Adrenal gland (tissue), 19 donors: ENCODE measurements at regions of chr1 and their contacts with region 1.

Region 1: GRCh38 chr1:150621497-150622302 is 7.7 kb downstream of the ENSA start:
- DNase-seq: peak in 6 of 7 donors; percentile 53 to 85 (median 63)
- H3K4me3 ChIP-seq: no peak overlapping the region
- H3K27ac ChIP-seq: peak overlapping the region in 4 of 5 donors; percentile 28 to 76 (median 56)
- H3K4me1 ChIP-seq: peaks cover 28 to 44% of the 10 kb centered on the region in 2 donors
- H3K27me3 ChIP-seq: no peaks in the 10 kb centered on the region
- CTCF ChIP-seq: peak; percentile 52 to 79 (median 70)
- POLR2A ChIP-seq: no peak

Region 2: DNA sequence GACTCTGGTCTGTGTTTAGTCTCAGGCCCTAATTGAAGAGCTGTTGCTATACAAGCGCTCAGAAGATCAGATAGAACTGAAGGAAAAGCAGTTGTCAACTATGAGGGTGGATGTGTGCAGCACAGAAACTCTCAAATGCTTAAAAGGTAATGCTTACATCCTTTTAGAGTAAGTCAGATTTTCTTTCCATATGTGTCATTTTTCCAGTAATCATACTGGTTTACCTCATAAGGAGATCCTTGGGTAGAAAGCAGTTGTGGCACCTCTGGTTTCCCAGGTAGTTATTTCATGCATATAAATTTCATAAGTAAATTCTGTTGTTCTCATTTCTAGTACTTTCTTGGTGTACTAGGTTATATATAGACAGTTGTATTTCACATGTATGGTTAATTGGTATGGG is 177.5 kb before region 1 on chr1:
- intact Hi-C with region 1: no loop called
- DNase-seq: no peak
- H3K4me3 ChIP-seq: no peak overlapping the region
- H3K27ac ChIP-seq: no peak overlapping the region
- H3K4me1 ChIP-seq: no peaks in the 10 kb centered on the region
- H3K27me3 ChIP-seq: no peaks in the 10 kb centered on the region
- CTCF ChIP-seq: no peak
- POLR2A ChIP-seq: no peak

Region 3: DNA sequence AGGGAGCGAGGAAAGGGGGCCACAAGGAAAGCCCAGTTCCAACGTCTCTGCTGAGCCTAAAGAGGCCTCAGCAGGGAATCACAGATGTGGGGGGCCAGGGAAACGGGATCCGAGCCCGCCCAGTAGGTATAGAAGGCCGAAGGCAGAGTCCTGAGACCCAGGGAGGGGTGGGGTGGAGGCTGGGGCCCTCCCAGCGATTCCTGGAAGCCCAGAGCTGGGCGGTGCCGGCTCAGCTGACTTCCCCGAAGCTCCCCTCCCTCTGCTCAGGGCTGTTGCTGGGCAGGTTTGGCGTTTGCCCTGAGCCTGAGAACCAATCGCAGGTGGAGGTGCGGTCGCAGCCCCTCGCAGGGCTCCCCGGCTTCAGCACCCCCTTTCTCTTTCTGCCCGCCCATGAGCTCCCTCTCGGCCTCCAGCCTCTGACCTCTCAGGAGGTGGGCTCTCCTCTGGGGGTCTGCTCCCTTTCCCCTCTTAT is 59.7 kb before region 1 on chr1:
- intact Hi-C with region 1: loop called (anchors 5 kb)
- DNase-seq: peak; percentile 94 to 97 (median 97)
- H3K4me3 ChIP-seq: peak overlapping the region in 3 of 4 donors; percentile 16 to 72 (median 27)
- H3K27ac ChIP-seq: peak overlapping the region; percentile 96 to 100 (median 100)
- H3K4me1 ChIP-seq: peaks cover 57 to 75% of the 10 kb centered on the region in 2 donors
- H3K27me3 ChIP-seq: no peaks in the 10 kb centered on the region
- CTCF ChIP-seq: no peak
- POLR2A ChIP-seq: peak in 1 of 2 donors; percentile 47

Region 4: GRCh38 chr1:150578965-150579798 is 42.5 kb before region 1 on chr1 and contains the start of gene MCL1:
- intact Hi-C with region 1: loop called (anchors 5 kb)
- DNase-seq: peak; percentile 92 to 97 (median 97)
- H3K4me3 ChIP-seq: peak within 1 kb of the TSS; percentile 67 to 99 (median 92)
- H3K27ac ChIP-seq: peak within 1 kb of the TSS; percentile 93 to 100 (median 100)
- H3K4me1 ChIP-seq: peaks cover 29 to 31% of the 10 kb centered on the region in 2 donors
- H3K27me3 ChIP-seq: no peaks in the 10 kb centered on the region
- CTCF ChIP-seq: peak in 4 of 6 experiments; percentile 12 to 29 (median 19)
- POLR2A ChIP-seq: peak; percentile 98
- total RNA-seq, gene MCL1: 101 to 299 (median 199) TPM